CD4-positive, alpha-beta T cell (primary cell): ENCODE measurements at regions of chr15 and their contacts with region 1.

Region 1: GRCh38 chr15:39846108-39846507 is 63.5 kb upstream of the FSIP1 start:
- DNase-seq: no peak
- ATAC-seq: no peak
- H3K4me3 ChIP-seq: no peak overlapping the region
- H3K4me3 Mint-ChIP-seq: no peak overlapping the region
- H3K27ac ChIP-seq: no peak overlapping the region
- H3K27ac Mint-ChIP-seq: no peak overlapping the region
- H3K4me1 ChIP-seq: no peaks in the 10 kb centered on the region
- H3K4me1 Mint-ChIP-seq: no peaks in the 10 kb centered on the region
- H3K27me3 ChIP-seq: peaks cover 0 to 4% of the 10 kb centered on the region in 2 experiments
- H3K27me3 Mint-ChIP-seq: peaks cover 33% of the 10 kb centered on the region
- CTCF ChIP-seq: no peak

Region 2: DNA sequence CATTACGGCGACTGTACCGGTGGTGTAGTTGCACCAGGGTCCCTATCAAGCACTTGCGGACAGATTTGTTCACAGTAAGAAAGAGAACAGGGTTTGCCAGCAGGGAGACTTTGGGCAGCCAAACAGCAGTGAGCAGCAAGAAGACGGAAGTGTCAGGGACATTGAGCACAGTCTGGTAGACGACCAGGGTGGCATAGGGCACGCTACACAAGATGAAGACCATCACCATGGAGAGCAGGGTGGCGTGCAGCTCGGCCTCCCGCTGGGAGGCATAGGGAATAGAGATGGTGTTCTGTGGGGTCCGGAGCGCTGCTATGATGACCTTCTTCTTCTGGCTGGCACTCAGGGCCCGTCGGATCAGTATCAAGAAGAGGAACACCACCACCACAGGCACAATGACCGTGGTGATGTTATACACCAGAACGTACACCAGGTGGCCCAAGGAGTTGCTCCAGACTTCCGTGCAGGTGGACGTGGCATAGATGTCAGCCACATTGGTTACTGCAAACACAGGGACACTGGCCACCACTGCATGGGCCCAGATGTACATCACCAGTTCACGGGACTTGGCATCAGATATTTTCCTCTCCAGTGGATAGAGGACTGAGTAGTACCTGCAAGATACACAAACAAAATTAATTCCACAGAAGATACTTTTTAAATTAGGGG is 44.3 kb before region 1 on chr15:
- CTCF ChIA-PET with region 1: no interaction called
- POLR2A ChIA-PET with region 1: no interaction called
- intact Hi-C with region 1: no loop called
- DNase-seq: peak in 2 of 14 experiments; percentile 23 to 35
- ATAC-seq: peak; percentile 41
- H3K4me3 ChIP-seq: no peak overlapping the region
- H3K4me3 Mint-ChIP-seq: no peak overlapping the region
- H3K27ac ChIP-seq: no peak overlapping the region
- H3K27ac Mint-ChIP-seq: no peak overlapping the region
- H3K4me1 ChIP-seq: no peaks in the 10 kb centered on the region
- H3K4me1 Mint-ChIP-seq: no peaks in the 10 kb centered on the region
- H3K27me3 ChIP-seq: peaks cover 14 to 31% of the 10 kb centered on the region in 2 experiments
- H3K27me3 Mint-ChIP-seq: peaks cover 49% of the 10 kb centered on the region
- CTCF ChIP-seq: peak; percentile 20

Region 3: DNA sequence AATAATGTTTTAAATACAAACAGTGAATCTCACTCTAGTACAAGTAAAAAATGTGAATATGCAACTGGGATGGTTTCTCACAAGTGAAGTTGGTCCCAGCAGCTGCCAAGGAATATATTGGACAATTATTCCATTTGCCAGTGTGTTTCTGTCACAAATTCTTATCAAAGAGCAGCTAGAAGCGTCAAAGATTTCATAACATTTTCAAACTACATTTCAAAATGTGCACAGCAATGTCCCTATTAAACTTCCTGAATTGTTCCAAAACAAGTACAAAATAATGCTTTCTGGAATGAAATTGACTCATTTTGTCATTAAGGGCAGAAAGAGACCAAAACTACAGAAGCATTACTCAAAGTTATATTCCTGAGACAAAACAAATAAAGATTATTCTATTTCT is 35.7 kb after region 1 on chr15:
- CTCF ChIA-PET with region 1: no interaction called
- POLR2A ChIA-PET with region 1: no interaction called
- intact Hi-C with region 1: loop called in 1 of 2 experiments (anchors 1 kb)
- DNase-seq: no peak
- ATAC-seq: no peak
- H3K4me3 ChIP-seq: no peak overlapping the region
- H3K4me3 Mint-ChIP-seq: no peak overlapping the region
- H3K27ac ChIP-seq: no peak overlapping the region
- H3K27ac Mint-ChIP-seq: no peak overlapping the region
- H3K4me1 ChIP-seq: no peaks in the 10 kb centered on the region
- H3K4me1 Mint-ChIP-seq: no peaks in the 10 kb centered on the region
- H3K27me3 ChIP-seq: peaks cover 2 to 18% of the 10 kb centered on the region in 2 experiments
- H3K27me3 Mint-ChIP-seq: peaks cover 24% of the 10 kb centered on the region
- CTCF ChIP-seq: no peak